Caco-2 (cell line): ENCODE measurements at regions of chr5 and their contacts with region 1.

Region 1: DNA sequence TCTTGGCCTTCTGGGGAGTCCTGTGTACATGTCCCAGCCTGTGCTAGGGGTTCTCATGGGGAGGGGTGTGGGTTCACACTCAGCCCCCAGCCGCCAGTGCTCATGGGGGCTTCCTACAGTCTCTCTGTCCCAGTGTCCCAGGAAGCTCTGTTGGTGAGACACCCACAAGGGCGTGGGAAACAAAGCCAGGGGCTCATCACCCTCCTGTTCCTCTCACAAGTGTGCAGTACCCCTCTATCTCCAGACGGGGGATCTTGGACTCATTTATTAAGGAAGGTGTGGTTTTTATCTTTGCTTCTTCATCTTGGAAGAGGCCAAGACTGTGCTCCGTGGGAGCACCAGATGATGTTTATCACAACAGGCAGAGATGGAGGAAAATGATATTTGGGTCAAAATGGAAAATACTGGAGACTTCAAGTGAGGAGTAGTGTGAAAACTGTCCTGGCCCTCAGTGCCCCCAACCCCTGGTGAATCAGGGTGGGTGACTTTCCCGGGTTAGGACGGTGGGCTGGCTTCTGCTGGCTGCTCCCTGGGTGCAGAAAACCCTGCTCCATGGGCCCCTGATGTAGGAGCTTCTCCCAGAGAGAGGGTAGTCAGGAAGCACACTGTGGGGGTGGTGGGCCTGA is 15.2 kb downstream of the TMEM171 start:
- DNase-seq: no peak
- H3K4me3 ChIP-seq: no peak overlapping the region
- H3K4me3 Mint-ChIP-seq: no peak overlapping the region
- H3K27ac Mint-ChIP-seq: no peak overlapping the region
- H3K4me1 ChIP-seq: peaks cover 18% of the 10 kb centered on the region
- H3K4me1 Mint-ChIP-seq: peaks cover 13% of the 10 kb centered on the region
- H3K27me3 ChIP-seq: no peaks in the 10 kb centered on the region
- H3K27me3 Mint-ChIP-seq: peaks cover 3% of the 10 kb centered on the region
- CTCF ChIP-seq: peak; percentile 32 to 54

Region 2: DNA sequence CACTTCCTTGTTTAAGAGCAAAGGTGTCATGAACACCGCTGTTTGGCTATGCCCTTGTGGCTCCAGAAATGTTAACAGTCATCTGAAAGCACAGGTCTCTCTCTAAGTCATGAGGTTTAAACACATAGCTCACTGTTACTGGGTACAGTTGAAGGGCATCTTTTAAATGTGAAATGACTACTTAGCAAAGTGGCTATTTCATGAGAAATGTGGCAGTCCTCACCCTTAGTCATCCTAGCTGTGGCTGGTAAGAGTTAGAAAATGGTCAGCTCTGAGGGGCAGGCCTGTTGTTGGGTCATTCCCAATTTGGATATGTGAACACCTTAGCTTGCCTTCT is 39.3 kb before region 1 on chr5:
- CTCF ChIA-PET with region 1: no interaction called
- POLR2A ChIA-PET with region 1: no interaction called
- intact Hi-C with region 1: loop called (anchors 5 kb)
- DNase-seq: no peak
- H3K4me3 ChIP-seq: no peak overlapping the region
- H3K4me3 Mint-ChIP-seq: no peak overlapping the region
- H3K27ac Mint-ChIP-seq: no peak overlapping the region
- H3K4me1 ChIP-seq: peaks cover 11% of the 10 kb centered on the region
- H3K4me1 Mint-ChIP-seq: peaks cover 16% of the 10 kb centered on the region
- H3K27me3 ChIP-seq: no peaks in the 10 kb centered on the region
- H3K27me3 Mint-ChIP-seq: no peaks in the 10 kb centered on the region
- CTCF ChIP-seq: no peak

Region 3: DNA sequence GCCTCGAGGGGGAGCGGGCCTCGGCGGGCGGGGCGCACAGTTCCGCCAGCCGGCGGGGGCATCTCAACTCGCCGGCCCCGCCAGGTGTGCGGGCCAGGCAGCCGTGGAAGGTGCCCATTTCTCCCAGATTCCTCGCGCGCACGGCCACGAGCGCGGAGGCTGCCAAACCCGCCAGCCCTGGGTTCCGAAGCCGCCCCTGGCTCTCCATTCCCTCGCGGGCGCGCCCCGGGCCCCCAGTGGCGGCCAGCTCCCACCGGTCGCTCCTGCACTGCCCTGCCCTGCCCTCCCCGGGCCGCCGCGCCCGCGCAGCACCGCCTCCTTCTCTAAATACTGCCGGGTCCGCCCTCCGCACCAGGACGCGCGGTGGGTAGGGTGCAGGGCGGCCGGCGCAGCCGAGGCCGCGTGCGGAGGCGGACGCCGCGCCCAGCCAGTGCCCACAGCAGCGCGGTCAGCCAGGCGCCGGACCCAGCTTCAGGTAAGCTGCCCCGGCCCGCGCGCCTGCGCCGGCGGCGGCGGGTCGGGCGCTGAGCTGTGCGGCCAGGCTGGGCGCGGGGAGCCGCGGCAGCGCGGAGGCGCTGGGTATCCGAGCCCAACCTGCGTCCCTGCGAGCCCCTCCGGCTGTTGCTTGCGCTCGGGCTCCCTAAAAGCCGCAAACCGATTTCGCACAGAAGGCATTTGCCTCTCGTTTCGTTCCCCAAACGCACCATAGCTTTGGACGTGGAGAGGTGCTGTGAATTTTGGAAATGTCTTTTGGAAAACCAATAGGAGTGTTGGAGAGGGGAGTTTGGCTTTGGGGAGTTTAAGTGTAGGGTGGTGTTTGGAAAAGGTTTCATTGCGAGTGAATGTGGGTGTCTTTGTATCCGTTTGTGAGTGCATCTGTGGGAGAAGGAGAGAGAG is 15.1 kb before region 1 on chr5 and contains the start of gene TMEM171:
- CTCF ChIA-PET with region 1: no interaction called
- POLR2A ChIA-PET with region 1: no interaction called
- intact Hi-C with region 1: no loop called
- DNase-seq: peak; percentile 57 to 62
- H3K4me3 ChIP-seq: peak within 1 kb of the TSS; percentile 62
- H3K4me3 Mint-ChIP-seq: peak within 1 kb of the TSS; percentile 71
- H3K27ac Mint-ChIP-seq: no peak within 1 kb of the TSS
- H3K4me1 ChIP-seq: peaks cover 21% of the 10 kb centered on the region
- H3K4me1 Mint-ChIP-seq: peaks cover 6% of the 10 kb centered on the region
- H3K27me3 ChIP-seq: no peaks in the 10 kb centered on the region; the same call in 1 of the 2 replicates
- H3K27me3 Mint-ChIP-seq: peaks cover 3% of the 10 kb centered on the region
- CTCF ChIP-seq: no peak
- total RNA-seq, gene TMEM171: 0.86 and 1.2 TPM in 2 replicates